Heart right ventricle (tissue), 16 donors: ENCODE measurements at regions of chr19 and their contacts with region 1.

Region 1: DNA sequence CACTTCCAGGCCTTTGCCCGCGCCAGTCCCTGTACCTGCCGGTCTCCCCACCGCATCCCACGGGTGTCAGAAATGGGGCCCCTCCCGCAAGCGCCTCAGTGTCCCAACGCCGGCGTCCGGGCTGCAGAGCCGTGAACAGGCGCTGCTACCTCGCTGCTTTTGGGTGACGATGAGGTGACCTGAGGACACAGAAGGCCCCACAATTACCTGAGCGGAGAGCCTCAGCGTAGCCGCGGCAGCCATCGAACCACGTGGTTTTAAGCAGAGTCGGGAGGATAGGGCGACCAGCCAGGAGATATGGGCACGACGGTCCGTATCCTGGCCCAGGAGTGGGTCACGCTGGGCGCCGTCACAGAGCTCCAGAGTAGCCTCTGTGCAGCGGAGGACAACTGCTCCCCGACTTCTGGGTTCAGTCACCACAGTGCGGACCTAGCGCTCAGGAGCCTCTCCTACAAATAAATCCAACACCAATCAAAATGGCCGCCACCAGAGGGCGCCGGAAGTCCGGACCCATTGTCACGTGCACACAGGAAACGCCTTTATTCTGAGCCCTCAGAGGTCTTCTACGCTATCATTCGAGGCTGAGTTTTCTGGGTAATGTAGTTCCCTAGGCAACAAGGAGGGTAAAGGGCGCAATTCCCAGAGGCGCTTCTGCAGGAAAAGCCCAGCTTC is at the start of gene ZNF814:
- DNase-seq: peak; percentile 81 to 92
- ATAC-seq: peak; percentile 92 to 98 (median 96)
- H3K4me3 ChIP-seq: peak within 1 kb of the TSS; percentile 49 to 96 (median 78)
- H3K27ac ChIP-seq: peak within 1 kb of the TSS in 9 of 10 donors; percentile 69 to 88 (median 76)
- H3K4me1 ChIP-seq: peaks cover 0 to 35% (median 13%) of the 10 kb centered on the region in 9 donors
- H3K27me3 ChIP-seq: no peaks in the 10 kb centered on the region
- CTCF ChIP-seq: peak in 8 of 9 donors; percentile 36 to 77 (median 64)
- total RNA-seq, gene ZNF814: 6.2 to 14.8 (median 12.6) TPM

Region 2: GRCh38 chr19:57759096-57759495 is 129.6 kb before region 1 on chr19:
- intact Hi-C with region 1: loop called in 1 of 10 experiments (anchors 10 kb)
- DNase-seq: no peak
- ATAC-seq: peak in 1 of 8 donors; percentile 42
- H3K4me3 ChIP-seq: no peak overlapping the region
- H3K27ac ChIP-seq: no peak overlapping the region
- H3K4me1 ChIP-seq: no peaks in the 10 kb centered on the region
- H3K27me3 ChIP-seq: no peaks in the 10 kb centered on the region
- CTCF ChIP-seq: no peak